WTC11 (cell line): ENCODE measurements at regions of chr11 and their contacts with region 1.

Region 1: DNA sequence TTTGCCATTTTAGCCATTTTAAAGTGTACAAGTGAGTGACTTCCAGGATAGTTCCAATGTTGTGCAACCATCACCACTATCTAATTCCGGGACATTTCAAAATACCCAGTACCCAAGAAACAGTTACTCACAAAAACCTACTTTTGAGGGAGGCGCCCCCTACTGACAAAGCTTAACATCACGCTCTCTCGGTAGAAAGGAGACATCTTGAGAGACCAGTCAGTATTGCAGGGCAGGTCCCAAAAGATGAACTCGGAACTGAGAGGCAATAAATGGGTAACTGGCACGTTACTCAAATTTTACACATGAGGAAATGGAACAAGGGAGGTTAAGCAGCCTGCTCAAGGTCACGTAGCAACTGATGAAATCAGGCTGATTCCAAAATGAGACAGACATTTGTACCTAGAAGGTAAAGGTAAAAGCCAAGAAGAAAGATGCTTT is 50.0 kb upstream of the POU2AF1 start:
- DNase-seq: peak; percentile 75
- ATAC-seq: peak; percentile 77
- H3K4me3 Mint-ChIP-seq: no peak overlapping the region
- H3K27ac Mint-ChIP-seq: no peak overlapping the region
- H3K4me1 Mint-ChIP-seq: peaks cover 20% of the 10 kb centered on the region
- H3K27me3 Mint-ChIP-seq: no peaks in the 10 kb centered on the region
- CTCF ChIP-seq: peak; percentile 77

Region 2: GRCh38 chr11:111299101-111300026 is 129.7 kb before region 1 on chr11:
- CTCF ChIA-PET with region 1: interaction called, 14 read pairs
- POLR2A ChIA-PET with region 1: interaction called, 4 read pairs
- DNase-seq: peak; percentile 74
- ATAC-seq: peak; percentile 60
- H3K4me3 Mint-ChIP-seq: peak overlapping the region; percentile 76
- H3K27ac Mint-ChIP-seq: no peak overlapping the region
- H3K4me1 Mint-ChIP-seq: peaks cover 34% of the 10 kb centered on the region
- H3K27me3 Mint-ChIP-seq: peaks cover 26% of the 10 kb centered on the region
- CTCF ChIP-seq: 0 out of 2 replicates have a peak, but pooled peaks have one; percentile 30

Region 3: DNA sequence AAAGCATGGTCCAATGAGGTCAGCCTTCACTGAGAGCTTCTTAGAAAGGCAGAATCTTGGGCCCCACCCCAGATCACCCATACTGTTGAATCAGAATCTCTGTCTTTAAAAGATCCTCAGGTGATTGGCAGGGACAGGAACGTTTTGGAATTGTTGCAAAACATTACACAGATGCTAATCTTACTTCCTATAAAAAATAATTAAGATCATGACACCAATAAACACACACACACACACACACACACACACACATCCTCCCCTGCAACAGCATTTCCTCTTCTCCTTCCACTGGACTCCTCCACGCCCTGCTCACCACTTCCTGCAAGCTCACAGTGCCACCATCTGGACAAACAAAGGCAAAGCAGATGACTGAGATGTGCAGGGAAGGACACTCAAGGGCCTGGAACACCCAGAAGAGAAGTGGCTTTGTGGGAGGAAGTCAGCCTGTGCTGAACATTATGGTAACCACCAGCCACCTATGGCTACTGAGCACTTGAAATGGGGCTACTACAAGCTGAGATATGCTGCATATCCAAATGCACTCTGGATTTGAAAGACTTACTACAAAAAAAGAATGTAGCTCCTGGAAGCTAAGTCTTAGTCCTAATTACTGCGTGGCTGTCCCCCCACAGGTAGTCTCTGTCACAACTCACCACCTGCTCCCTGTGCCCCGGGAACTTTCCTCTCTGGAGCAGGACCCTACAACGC is 17.5 kb after region 1 on chr11:
- CTCF ChIA-PET with region 1: interaction called, 12 read pairs
- POLR2A ChIA-PET with region 1: no interaction called
- DNase-seq: peak; percentile 60
- ATAC-seq: peak; percentile 96
- H3K4me3 Mint-ChIP-seq: no peak overlapping the region
- H3K27ac Mint-ChIP-seq: no peak overlapping the region; the same call in 1 of the 2 replicates
- H3K4me1 Mint-ChIP-seq: peaks cover 22% of the 10 kb centered on the region
- H3K27me3 Mint-ChIP-seq: no peaks in the 10 kb centered on the region
- CTCF ChIP-seq: peak; percentile 70

Region 4: GRCh38 chr11:111512296-111513239 is 83.5 kb after region 1 on chr11 and contains the start of gene BTG4:
- CTCF ChIA-PET with region 1: no interaction called
- POLR2A ChIA-PET with region 1: no interaction called
- DNase-seq: peak; percentile 58
- ATAC-seq: peak; percentile 65
- H3K4me3 Mint-ChIP-seq: peak within 1 kb of the TSS; percentile 83
- H3K27ac Mint-ChIP-seq: no peak within 1 kb of the TSS
- H3K4me1 Mint-ChIP-seq: peaks cover 21% of the 10 kb centered on the region
- H3K27me3 Mint-ChIP-seq: peaks cover 49% of the 10 kb centered on the region
- CTCF ChIP-seq: no peak
- total RNA-seq, gene BTG4: 0.18 TPM in 1 of 3 replicates, not detected in the others